Activated CD4-positive, alpha-beta memory T cell treated with anti-CD3 and anti-CD28 coated beads, Interleukin-2, amount 10 ng/mL, durations not matched to agents 7 days and 5 days (primary cell): ENCODE measurements at regions of chr18 and their contacts with region 1.

Region 1: DNA sequence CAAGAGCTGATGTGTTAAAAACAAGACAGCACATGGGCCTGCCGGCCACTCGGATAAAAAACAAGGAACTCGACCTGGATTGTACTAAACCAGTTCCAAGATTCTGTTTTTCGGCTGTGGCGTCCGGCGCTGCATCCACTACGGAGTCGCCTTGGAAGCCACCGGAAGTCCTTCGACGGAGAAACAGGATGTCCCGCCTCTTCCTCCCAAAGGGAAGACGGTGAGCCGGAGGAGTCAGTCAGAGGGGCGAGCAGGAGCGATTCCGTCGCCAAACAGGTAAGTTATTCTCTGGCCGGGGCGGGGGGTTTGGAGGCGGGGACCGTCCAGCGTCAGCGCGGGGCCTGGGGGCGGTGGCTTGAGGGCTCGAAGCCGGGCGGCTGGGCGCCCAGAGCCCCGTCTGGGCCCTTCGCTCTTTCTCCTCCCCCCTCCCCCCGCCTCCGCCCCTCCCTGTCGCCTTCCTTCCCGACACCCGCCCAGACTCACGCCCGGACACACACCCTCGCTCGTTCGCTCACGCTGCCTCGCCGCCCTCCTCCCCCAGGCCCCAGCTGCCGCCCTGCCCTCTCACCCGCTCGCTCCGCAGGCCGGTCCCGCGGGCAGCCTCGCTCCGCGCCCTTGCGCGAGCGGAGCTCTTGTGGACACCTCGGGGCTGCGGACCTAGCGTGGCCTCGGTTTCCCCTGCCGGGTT is at the start of gene ZNF407:
- DNase-seq: peak; percentile 88
- H3K4me3 Mint-ChIP-seq: peak within 1 kb of the TSS; percentile 90
- H3K27ac Mint-ChIP-seq: peak within 1 kb of the TSS; percentile 96
- H3K4me1 Mint-ChIP-seq: peaks cover 50% of the 10 kb centered on the region
- H3K27me3 Mint-ChIP-seq: no peaks in the 10 kb centered on the region
- total RNA-seq, gene ZNF407: 11.7 to 13.4 TPM

Region 2: GRCh38 chr18:74495581-74496507 is 102.0 kb before region 1 on chr18 and contains the start of gene CNDP2:
- CTCF ChIA-PET with region 1: no interaction called
- POLR2A ChIA-PET with region 1: interaction called, 17 read pairs
- DNase-seq: peak; percentile 99
- H3K4me3 Mint-ChIP-seq: peak within 1 kb of the TSS; percentile 88
- H3K27ac Mint-ChIP-seq: peak within 1 kb of the TSS; percentile 99
- H3K4me1 Mint-ChIP-seq: peaks cover 43% of the 10 kb centered on the region
- H3K27me3 Mint-ChIP-seq: peaks cover 11% of the 10 kb centered on the region
- total RNA-seq, gene CNDP2: 141 to 143 TPM

Region 3: GRCh38 chr18:74582642-74583041 is 15.2 kb before region 1 on chr18:
- CTCF ChIA-PET with region 1: no interaction called
- POLR2A ChIA-PET with region 1: interaction called, 13 read pairs
- DNase-seq: no peak
- H3K4me3 Mint-ChIP-seq: no peak overlapping the region
- H3K27ac Mint-ChIP-seq: no peak overlapping the region
- H3K4me1 Mint-ChIP-seq: no peaks in the 10 kb centered on the region
- H3K27me3 Mint-ChIP-seq: peaks cover 47% of the 10 kb centered on the region

Region 4: DNA sequence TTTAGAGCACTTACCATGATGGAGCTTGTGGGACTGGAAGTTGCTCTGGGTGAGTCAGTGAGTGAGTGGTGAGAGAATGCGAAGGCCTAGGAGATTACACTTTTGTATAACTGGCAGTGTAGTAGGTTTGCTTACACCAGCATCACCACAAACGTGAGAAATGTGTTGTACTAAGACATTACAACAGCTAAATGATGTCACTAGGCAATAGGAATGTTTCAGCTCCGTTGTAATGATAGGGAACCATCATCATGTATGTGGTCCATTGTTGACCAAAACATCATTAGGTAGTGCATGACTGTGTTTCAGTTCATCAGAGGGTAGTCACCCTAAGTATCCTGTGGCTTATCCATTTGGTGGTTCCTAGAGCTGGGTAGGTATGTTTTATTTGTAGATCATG is 11.7 kb after region 1 on chr18:
- CTCF ChIA-PET with region 1: interaction called, 3 read pairs
- POLR2A ChIA-PET with region 1: interaction called, 10 read pairs
- DNase-seq: no peak
- H3K4me3 Mint-ChIP-seq: no peak overlapping the region
- H3K27ac Mint-ChIP-seq: no peak overlapping the region
- H3K4me1 Mint-ChIP-seq: peaks cover 10% of the 10 kb centered on the region
- H3K27me3 Mint-ChIP-seq: no peaks in the 10 kb centered on the region

Region 5: DNA sequence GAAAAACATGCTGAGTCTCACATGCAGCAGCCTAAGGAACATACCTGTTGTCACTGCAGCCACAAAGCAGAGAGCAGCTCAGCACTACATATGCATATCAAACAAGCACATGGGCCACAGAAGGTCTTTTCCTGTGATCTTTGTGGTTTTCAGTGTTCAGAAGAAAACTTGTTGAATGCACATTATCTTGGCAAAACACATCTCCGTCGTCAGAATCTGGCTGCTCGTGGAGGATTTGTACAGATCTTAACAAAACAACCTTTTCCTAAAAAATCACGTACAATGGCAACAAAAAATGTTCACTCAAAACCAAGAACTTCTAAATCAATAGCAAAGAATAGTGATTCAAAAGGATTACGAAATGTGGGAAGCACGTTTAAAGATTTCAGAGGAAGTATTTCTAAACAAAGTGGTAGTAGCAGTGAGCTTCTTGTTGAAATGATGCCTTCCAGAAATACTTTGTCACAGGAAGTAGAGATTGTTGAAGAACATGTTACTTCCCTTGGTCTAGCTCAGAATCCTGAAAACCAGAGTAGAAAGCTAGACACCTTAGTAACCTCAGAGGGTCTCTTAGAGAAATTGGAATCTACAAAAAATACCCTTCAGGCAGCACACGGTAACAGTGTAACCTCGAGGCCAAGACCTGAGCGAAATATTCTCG is 33.9 kb after region 1 on chr18:
- CTCF ChIA-PET with region 1: interaction called, 4 read pairs
- POLR2A ChIA-PET with region 1: interaction called, 20 read pairs
- DNase-seq: no peak
- H3K4me3 Mint-ChIP-seq: peak overlapping the region; percentile 54
- H3K27ac Mint-ChIP-seq: peak overlapping the region; percentile 91
- H3K4me1 Mint-ChIP-seq: peaks cover 35% of the 10 kb centered on the region
- H3K27me3 Mint-ChIP-seq: no peaks in the 10 kb centered on the region

Region 6: GRCh38 chr18:75209129-75209950 is 611.5 kb after region 1 on chr18 and contains the start of gene PTGR3:
- CTCF ChIA-PET with region 1: interaction called, 3 read pairs
- POLR2A ChIA-PET with region 1: interaction called, 26 read pairs
- DNase-seq: peak; percentile 89
- H3K4me3 Mint-ChIP-seq: peak within 1 kb of the TSS; percentile 94
- H3K27ac Mint-ChIP-seq: peak within 1 kb of the TSS; percentile 98
- H3K4me1 Mint-ChIP-seq: peaks cover 63% of the 10 kb centered on the region
- H3K27me3 Mint-ChIP-seq: peaks cover 20% of the 10 kb centered on the region
- total RNA-seq, gene PTGR3: 39.8 to 41.4 TPM